PC-3 (cell line): ENCODE measurements at regions of chr13 and their contacts with region 1.

Region 1: GRCh38 chr13:43804461-43805070 is 17.8 kb upstream of the ENOX1 start:
- DNase-seq: peak; percentile 82
- ATAC-seq: peak; percentile 66
- H3K4me3 ChIP-seq: peak overlapping the region; percentile 63
- H3K27ac ChIP-seq: peak overlapping the region; percentile 95
- H3K4me1 ChIP-seq: peaks cover 29% of the 10 kb centered on the region
- H3K27me3 ChIP-seq: no peaks in the 10 kb centered on the region
- CTCF ChIP-seq: peak; percentile 63

Region 2: DNA sequence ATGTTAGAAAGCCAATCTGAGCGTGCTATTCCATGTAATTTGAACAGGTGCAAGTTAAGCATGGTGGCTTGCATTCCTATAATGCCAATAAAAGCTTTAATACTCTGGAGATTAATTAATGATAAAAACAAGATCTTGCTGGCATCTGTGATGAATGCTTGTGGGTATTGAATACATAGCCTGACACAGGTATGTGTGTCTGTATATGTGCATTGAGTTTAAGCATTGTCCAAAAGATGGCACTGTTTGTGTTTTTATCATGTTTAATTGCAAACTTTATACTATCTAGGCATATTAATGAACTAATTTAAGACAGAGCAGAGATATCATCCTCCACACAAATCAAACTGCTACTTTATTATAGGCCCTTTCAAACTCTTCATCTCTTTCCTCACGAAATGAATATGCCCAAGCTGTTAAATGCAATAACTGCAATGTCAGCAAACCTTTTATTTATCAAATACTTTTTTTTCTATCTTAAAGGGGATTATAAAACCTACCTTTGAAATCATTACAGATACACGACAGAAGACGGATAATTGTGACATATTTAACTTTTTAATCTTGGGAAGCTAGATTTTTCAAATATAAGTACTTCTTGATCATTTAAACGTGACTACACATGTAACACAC is 1144.1 kb before region 1 on chr13:
- CTCF ChIA-PET with region 1: no interaction called
- POLR2A ChIA-PET with region 1: no interaction called
- intact Hi-C with region 1: loop called (anchors 2 kb)
- DNase-seq: peak; percentile 26
- ATAC-seq: peak; percentile 50; the same call in 1 of the 2 replicates
- H3K4me3 ChIP-seq: no peak overlapping the region
- H3K27ac ChIP-seq: no peak overlapping the region
- H3K4me1 ChIP-seq: no peaks in the 10 kb centered on the region
- H3K27me3 ChIP-seq: no peaks in the 10 kb centered on the region
- CTCF ChIP-seq: peak; percentile 57

Region 3: DNA sequence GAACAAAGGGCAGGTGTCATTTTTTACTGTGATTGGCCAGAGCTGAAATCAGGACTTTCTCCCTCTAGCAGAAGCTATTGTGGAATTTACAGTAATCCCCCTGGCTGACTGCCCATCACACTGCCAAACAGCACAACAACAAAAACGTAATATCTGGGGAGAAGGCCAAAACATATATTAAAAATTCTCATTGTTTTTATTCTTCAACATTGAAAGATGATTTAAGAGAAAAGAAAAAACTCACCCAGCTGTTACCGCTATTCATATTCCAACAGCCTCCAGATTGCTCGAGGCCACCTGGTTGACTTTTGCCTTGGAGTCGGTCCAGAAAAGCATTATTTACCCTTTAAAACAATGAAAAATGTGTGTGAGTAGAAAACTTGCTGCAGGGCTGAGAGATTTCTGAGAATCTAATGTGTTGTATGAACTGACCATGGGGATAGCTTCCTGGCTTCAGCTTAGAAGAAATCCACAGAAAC is 909.8 kb before region 1 on chr13:
- CTCF ChIA-PET with region 1: no interaction called
- POLR2A ChIA-PET with region 1: no interaction called
- intact Hi-C with region 1: loop called (anchors 10 kb)
- DNase-seq: peak; percentile 51
- ATAC-seq: no peak; the same call in 1 of the 2 replicates
- H3K4me3 ChIP-seq: no peak overlapping the region
- H3K27ac ChIP-seq: no peak overlapping the region
- H3K4me1 ChIP-seq: peaks cover 24% of the 10 kb centered on the region
- H3K27me3 ChIP-seq: no peaks in the 10 kb centered on the region
- CTCF ChIP-seq: no peak

Region 4: GRCh38 chr13:43792076-43792881 is 12.3 kb before region 1 on chr13:
- CTCF ChIA-PET with region 1: no interaction called
- POLR2A ChIA-PET with region 1: no interaction called
- intact Hi-C with region 1: no loop called
- DNase-seq: peak; percentile 10
- ATAC-seq: peak; percentile 59
- H3K4me3 ChIP-seq: no peak overlapping the region
- H3K27ac ChIP-seq: no peak overlapping the region
- H3K4me1 ChIP-seq: peaks cover 7% of the 10 kb centered on the region; the same call in 1 of the 2 replicates
- H3K27me3 ChIP-seq: no peaks in the 10 kb centered on the region
- CTCF ChIP-seq: no peak